Common myeloid progenitor, CD34-positive (primary cell): ENCODE measurements at regions of chr4 and their contacts with region 1.

Region 1: DNA sequence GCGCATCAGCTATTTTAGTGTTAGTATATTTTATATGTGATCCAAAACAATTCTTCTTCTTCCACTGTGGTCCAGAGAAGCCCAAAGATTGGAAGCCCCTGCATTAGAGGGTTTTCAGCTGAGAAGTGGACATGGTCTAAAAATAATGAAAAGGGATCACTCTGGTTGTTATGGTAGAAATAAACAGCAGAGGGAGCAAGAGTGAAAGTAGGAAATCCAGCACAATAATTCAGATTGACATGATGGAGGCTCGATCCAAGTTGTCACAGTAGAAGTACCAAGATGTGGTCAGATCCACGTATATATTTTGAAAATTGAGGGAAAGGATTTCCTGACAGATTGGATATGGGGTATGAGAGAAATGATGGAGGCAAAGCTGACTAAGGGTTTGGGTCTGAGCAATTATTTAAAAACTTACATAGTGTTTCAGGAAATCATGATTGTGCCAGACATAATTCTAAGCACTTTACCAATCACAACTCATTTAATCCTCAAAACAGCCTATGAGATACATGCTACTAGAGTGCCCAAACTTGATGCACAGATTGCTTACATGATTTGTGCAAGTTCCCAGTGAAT is 17.0 kb upstream of the TMEM144 start:
- DNase-seq: peak; percentile 47 to 61 (median 54)
- H3K4me3 ChIP-seq: peak overlapping the region in 1 of 7 experiments; percentile 55
- H3K27ac ChIP-seq: no peak overlapping the region
- H3K4me1 ChIP-seq: peaks cover 0 to 3% (median 0%) of the 10 kb centered on the region in 4 experiments
- H3K27me3 ChIP-seq: no peaks in the 10 kb centered on the region

Region 2: GRCh38 chr4:158159054-158159717 is 34.1 kb before region 1 on chr4:
- CTCF ChIA-PET with region 1: no interaction called
- POLR2A ChIA-PET with region 1: no interaction called
- DNase-seq: peak in 2 of 3 donors; percentile 15 to 19
- H3K4me3 ChIP-seq: no peak overlapping the region
- H3K27ac ChIP-seq: no peak overlapping the region
- H3K4me1 ChIP-seq: peaks cover 0 to 10% (median 9%) of the 10 kb centered on the region in 4 experiments
- H3K27me3 ChIP-seq: peaks cover 0 to 11% (median 0%) of the 10 kb centered on the region in 5 experiments

Region 3: DNA sequence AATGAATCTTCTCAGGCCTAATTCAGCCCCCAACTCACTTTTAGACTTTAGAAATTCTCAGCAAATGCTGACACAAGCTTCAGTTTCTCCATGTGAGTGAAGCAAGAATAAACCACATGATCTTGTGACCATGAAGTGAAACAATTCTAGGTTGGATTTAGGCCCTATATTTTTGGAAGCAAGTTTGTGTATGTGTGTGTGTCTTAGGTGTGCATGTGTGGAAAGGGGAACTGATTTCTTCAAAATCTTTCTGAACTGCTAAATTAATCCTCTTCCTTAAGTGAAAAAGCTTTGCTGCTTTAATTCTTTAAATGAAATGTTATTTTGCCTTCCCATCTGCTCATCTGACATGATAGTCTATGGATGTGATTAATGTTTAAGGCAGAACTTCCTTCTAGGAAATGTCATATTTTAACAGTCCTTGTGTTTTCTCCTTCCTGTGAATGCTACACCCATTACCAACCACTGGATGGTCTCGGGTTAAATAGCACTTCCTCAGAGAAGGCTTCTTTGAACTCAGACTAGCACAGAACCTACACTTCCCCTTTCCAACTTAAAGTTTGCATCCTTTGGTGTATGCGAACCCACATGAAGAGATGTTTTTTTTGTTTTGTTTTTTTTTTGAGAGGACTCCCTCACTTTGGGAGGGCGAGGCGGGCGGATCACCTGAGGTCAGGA is 15.8 kb after region 1 on chr4:
- CTCF ChIA-PET with region 1: interaction called, 20 read pairs
- POLR2A ChIA-PET with region 1: no interaction called
- DNase-seq: peak; percentile 60 to 93 (median 86)
- H3K4me3 ChIP-seq: peak overlapping the region in 1 of 7 experiments; percentile 4
- H3K27ac ChIP-seq: peak overlapping the region in 1 of 2 experiments; percentile 92
- H3K4me1 ChIP-seq: peaks cover 11 to 37% (median 21%) of the 10 kb centered on the region in 4 experiments
- H3K27me3 ChIP-seq: no peaks in the 10 kb centered on the region

Region 4: DNA sequence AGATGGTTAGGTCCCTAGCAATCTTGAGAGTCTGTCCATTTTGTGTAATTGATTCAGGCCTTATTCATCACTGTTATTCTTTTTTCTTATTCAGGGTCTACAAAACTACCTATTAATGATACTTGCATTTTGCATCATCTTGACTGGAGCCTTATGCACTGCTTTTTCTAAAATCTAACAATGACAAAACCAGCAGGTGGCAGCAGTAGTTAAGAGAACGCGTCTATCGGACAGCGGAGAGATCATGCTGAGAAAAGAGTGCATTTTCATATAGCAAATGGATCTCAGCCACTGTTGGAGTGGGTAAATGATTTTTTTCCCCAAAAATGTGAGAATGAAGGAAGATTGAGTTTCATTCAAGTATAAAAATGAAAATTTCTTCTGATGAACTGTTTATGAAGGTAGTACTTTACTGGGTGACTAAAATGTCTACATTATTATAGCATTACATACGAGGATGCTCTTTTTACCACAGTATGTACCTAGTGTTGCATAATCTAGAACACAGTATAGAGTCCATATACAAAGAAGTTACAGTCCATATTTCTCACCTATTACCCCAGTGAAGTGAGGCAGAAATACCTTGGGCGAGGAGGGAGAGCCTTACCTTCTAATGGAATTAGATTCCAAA is 60.2 kb after region 1 on chr4:
- CTCF ChIA-PET with region 1: interaction called, 90 read pairs
- POLR2A ChIA-PET with region 1: no interaction called
- DNase-seq: peak; percentile 78 to 89 (median 88)
- H3K4me3 ChIP-seq: peak overlapping the region in 3 of 7 experiments; percentile 11 to 49 (median 46)
- H3K27ac ChIP-seq: peak overlapping the region in 1 of 2 experiments; percentile 35
- H3K4me1 ChIP-seq: peaks cover 15 to 39% (median 21%) of the 10 kb centered on the region in 4 experiments
- H3K27me3 ChIP-seq: no peaks in the 10 kb centered on the region